Heart left ventricle (tissue), 16 donors: ENCODE measurements at regions of chr17 and their contacts with region 1.

Region 1: GRCh38 chr17:66405836-66406677 is 103.6 kb downstream of the PRKCA start:
- DNase-seq: no peak
- ATAC-seq: peak in 1 of 4 donors; percentile 9
- H3K4me3 ChIP-seq: no peak overlapping the region
- H3K27ac ChIP-seq: no peak overlapping the region
- H3K4me1 ChIP-seq: peaks cover 0 to 35% (median 7%) of the 10 kb centered on the region in 12 donors
- H3K27me3 ChIP-seq: no peaks in the 10 kb centered on the region
- CTCF ChIP-seq: no peak
- POLR2A ChIP-seq: no peak

Region 2: DNA sequence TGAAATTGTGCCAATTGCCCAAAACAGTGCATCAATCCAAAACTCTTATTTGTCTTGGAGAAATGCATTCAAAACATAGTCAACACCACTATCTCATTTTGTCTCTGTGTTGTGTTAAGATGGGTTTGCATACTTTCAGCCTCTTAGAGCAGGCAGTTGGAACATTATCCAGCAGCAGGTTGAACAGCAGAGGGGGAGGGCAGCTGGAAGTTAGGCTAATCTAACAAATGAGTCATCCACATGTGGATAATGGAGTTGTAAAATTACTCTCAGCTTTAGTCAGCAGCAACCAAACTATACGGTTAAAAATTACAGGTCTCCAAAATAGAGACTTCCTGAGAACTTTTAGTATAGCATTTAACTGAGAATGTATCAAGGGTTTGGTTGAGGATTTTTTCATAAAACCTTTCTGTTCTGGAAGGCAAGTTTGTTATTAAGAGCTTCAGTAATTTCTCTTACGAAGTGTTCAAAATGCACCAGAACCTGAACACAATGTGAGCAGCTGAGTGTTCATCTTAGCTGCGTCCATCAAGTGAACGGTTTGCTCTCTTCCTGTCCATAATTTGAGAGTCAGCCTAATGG is 57.4 kb before region 1 on chr17:
- intact Hi-C with region 1: loop called in 1 of 10 experiments (anchors 10 kb)
- DNase-seq: peak in 4 of 5 donors; percentile 36 to 44 (median 38)
- ATAC-seq: peak; percentile 83 to 94 (median 90)
- H3K4me3 ChIP-seq: no peak overlapping the region
- H3K27ac ChIP-seq: peak overlapping the region in 3 of 12 donors; percentile 13 to 35 (median 28)
- H3K4me1 ChIP-seq: peaks cover 0 to 34% (median 16%) of the 10 kb centered on the region in 12 donors
- H3K27me3 ChIP-seq: no peaks in the 10 kb centered on the region
- CTCF ChIP-seq: no peak
- POLR2A ChIP-seq: no peak